Activated naive CD4-positive, alpha-beta T cell treated with anti-CD3 and anti-CD28 coated beads for 36 hours (primary cell): ENCODE measurements at regions of chr3 and their contacts with region 1.

Region 1: DNA sequence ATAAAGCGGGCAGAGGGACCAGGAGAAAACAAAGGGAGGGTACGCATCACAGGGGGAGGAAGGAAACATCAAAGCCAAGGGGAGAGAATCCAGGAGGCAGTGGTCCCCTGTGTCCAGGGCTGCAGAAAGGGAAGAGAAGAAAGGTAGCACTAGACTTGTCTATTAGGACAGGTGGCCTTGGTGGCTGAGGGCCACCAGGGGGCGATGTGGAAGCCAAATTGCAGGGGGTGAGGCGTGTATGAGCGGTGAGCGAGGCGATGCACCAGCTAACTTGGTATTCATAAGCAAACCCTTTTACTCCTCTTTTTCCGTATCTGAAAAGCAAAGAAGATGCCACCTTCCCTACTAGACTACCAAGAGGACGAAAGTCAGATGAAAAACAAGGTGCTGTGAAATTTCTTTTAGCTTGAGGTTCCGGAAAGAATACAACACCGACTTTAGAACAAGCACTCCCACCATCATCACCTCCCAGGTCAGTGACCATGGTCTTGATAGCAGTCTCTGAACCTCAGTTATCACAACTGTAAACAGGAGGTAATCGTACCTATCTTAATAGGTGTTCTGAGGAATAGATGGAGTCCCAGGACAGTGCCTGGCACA is 654.4 kb upstream of the ADAMTS9 start:
- DNase-seq: peak; percentile 49
- H3K4me3 Mint-ChIP-seq: no peak overlapping the region
- H3K27ac Mint-ChIP-seq: no peak overlapping the region
- H3K4me1 Mint-ChIP-seq: no peaks in the 10 kb centered on the region
- H3K27me3 Mint-ChIP-seq: no peaks in the 10 kb centered on the region

Region 2: DNA sequence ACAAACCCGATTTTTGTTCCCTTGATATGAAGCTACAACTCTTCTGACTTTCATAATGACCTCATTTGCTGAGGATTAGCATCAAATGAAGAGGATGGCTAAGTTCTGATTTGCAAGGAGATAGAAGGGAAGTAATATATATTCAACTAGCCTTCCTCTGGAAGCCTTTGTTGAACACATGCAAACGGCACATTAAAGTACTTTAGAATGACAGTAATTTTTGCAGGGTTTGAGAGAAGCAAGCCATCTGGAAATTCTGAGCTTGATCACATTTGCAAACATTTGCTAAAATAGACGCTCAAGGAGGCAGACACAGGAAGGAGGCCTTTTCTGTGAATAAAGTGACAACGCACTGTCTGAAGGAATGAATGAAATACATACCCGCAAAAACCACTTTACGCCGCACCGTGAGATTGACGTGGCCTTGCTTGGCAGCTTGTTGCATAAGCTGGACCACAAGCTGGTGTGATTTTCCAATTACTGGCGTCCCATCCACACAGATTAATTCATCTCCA is 39.4 kb after region 1 on chr3:
- CTCF ChIA-PET with region 1: no interaction called
- intact Hi-C with region 1: no loop called
- DNase-seq: no peak
- H3K4me3 Mint-ChIP-seq: no peak overlapping the region
- H3K27ac Mint-ChIP-seq: no peak overlapping the region
- H3K4me1 Mint-ChIP-seq: no peaks in the 10 kb centered on the region
- H3K27me3 Mint-ChIP-seq: no peaks in the 10 kb centered on the region

Region 3: DNA sequence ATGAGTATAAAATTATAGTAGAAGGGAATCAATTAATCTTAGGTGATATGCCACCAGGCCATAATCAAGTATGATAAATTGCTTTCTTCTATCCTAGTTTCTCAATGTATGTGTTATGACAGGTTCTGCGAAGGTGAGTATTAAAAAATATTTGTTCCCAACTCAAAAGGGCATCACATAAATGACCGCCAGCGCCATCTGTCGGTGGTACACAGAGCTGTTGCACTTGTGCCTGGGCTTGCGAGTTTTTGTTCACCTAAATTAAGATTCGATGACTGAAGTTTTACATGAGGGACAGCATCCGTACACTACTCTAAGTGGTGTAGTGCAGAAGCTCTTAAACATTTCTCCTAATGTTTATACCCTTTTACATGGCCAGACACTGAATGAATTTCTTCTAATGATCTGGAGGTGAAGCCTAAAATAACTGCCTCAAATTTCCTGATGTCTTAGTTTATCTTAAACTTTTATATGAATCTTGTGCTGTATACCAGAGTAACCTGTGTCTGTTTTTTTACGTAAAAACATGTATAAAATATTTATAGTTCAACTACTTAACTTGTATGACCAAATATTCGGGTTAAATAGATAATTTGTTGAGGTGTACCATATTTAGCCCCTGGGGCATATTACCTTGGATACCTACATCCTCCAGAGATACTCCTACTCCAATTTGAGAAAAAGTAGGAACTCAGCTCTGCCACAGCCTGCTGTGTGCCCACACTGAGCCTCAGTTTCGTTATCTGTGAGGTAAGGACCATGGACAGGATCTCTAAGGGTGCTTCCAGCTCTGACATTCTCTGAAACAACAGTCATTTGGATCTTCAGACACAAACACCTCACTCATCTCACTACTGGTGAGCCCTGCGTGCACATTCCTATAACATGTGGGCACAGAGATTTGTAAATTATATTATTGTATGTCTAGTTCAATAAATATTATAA is 331.0 kb after region 1 on chr3:
- CTCF ChIA-PET with region 1: no interaction called
- intact Hi-C with region 1: loop called (anchors 5 kb)
- DNase-seq: peak; percentile 42
- H3K4me3 Mint-ChIP-seq: no peak overlapping the region
- H3K27ac Mint-ChIP-seq: no peak overlapping the region
- H3K4me1 Mint-ChIP-seq: no peaks in the 10 kb centered on the region
- H3K27me3 Mint-ChIP-seq: peaks cover 3% of the 10 kb centered on the region